B cell (primary cell): ENCODE measurements at regions of chr10 and their contacts with region 1.

Region 1: DNA sequence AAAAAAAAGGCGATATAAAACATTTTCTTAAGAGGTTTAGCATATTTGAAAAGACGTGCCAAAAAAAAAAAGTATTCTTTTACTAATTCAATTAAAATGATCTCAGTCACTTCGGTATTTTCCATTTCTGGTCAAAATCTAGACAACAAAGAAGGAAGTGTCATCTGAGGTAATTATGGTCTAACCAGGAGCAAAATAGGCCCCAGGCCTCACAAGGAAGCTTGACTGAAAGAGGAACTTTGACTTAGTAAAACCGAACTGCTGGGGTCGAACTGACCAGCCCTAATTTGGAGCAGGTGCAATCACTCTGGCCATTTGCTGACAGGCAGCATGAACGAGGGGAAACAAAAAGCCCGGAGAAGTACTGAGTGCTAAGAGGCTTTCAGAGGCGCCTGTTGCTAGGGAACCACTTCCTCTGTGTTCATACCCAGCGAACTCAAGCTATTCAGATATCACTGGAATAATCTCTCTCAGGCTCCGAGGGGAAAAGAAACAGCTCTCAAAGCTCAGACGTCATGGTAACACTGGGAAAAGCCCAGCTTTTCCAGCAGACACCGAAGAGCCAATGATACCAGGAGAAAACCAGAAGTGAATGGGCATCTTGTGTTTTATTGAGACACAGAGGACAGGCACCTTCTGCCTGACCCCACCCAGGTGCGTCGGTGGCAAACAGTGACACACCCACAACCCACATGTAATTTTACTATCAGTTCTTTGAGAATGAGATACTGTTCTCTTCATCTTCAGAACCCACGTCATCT is 126.5 kb downstream of the FAM107B start:
- DNase-seq: peak; percentile 92
- ATAC-seq: peak; percentile 81
- H3K4me3 ChIP-seq: peak overlapping the region; percentile 29 to 58 (median 35)
- H3K4me3 Mint-ChIP-seq: peak overlapping the region; percentile 83
- H3K27ac ChIP-seq: peak overlapping the region; percentile 96 to 99
- H3K27ac Mint-ChIP-seq: peak overlapping the region; percentile 98
- H3K4me1 ChIP-seq: peaks cover 57 to 71% of the 10 kb centered on the region in 2 donors
- H3K4me1 Mint-ChIP-seq: peaks cover 82% of the 10 kb centered on the region
- H3K27me3 ChIP-seq: no peaks in the 10 kb centered on the region
- H3K27me3 Mint-ChIP-seq: no peaks in the 10 kb centered on the region
- CTCF ChIP-seq: no peak

Region 2: GRCh38 chr10:14659626-14660196 is 11.5 kb after region 1 on chr10:
- CTCF ChIA-PET with region 1: interaction called, 4 read pairs
- POLR2A ChIA-PET with region 1: interaction called, 11 read pairs
- intact Hi-C with region 1: loop called (anchors 1 kb)
- DNase-seq: peak; percentile 81
- ATAC-seq: peak; percentile 75
- H3K4me3 ChIP-seq: peak overlapping the region in 3 of 5 experiments; percentile 2 to 45 (median 3)
- H3K4me3 Mint-ChIP-seq: peak overlapping the region; percentile 66
- H3K27ac ChIP-seq: peak overlapping the region; percentile 72 to 88
- H3K27ac Mint-ChIP-seq: peak overlapping the region; percentile 94
- H3K4me1 ChIP-seq: peaks cover 63 to 71% of the 10 kb centered on the region in 2 donors
- H3K4me1 Mint-ChIP-seq: peaks cover 87% of the 10 kb centered on the region
- H3K27me3 ChIP-seq: no peaks in the 10 kb centered on the region
- H3K27me3 Mint-ChIP-seq: no peaks in the 10 kb centered on the region
- CTCF ChIP-seq: no peak

Region 3: DNA sequence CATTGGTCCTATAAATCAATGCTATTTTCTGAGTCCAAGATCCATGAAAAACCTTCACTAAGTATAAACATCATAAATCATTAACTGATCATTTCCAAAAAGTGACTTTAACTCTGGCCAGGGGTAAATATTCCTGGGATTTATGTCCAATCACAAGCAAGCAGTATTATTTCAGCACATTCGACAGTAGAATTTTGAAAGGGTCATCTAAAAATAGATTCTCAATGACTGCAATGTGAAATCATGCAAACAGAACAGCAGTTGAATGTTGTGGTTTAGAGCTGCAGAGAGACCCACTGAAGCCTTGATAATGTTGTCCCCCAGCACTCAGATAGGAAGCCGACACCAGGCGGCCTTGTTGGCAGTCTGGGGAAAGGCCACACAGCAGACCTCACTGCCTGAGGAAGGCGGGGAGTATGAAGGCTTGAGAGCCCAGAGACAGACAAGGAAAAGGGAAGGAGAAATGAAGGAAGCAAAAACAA is 88.5 kb after region 1 on chr10:
- CTCF ChIA-PET with region 1: no interaction called
- POLR2A ChIA-PET with region 1: interaction called, 15 read pairs
- intact Hi-C with region 1: loop called (anchors 1 kb)
- DNase-seq: peak; percentile 76
- ATAC-seq: peak; percentile 78
- H3K4me3 ChIP-seq: peak overlapping the region in 1 of 5 experiments; percentile 6
- H3K4me3 Mint-ChIP-seq: peak overlapping the region; percentile 73
- H3K27ac ChIP-seq: peak overlapping the region; percentile 84
- H3K27ac Mint-ChIP-seq: peak overlapping the region; percentile 95
- H3K4me1 ChIP-seq: peaks cover 64 to 70% of the 10 kb centered on the region in 2 donors
- H3K4me1 Mint-ChIP-seq: peaks cover 68% of the 10 kb centered on the region
- H3K27me3 ChIP-seq: no peaks in the 10 kb centered on the region
- H3K27me3 Mint-ChIP-seq: no peaks in the 10 kb centered on the region
- CTCF ChIP-seq: no peak

Region 4: GRCh38 chr10:14742815-14743214 is 94.6 kb after region 1 on chr10:
- CTCF ChIA-PET with region 1: interaction called, 3 read pairs
- POLR2A ChIA-PET with region 1: interaction called, 15 read pairs
- intact Hi-C with region 1: loop called (anchors 1 kb)
- DNase-seq: peak; percentile 78
- ATAC-seq: peak; percentile 83
- H3K4me3 ChIP-seq: peak overlapping the region in 1 of 5 experiments; percentile 14
- H3K4me3 Mint-ChIP-seq: peak overlapping the region; percentile 74
- H3K27ac ChIP-seq: peak overlapping the region; percentile 93 to 98
- H3K27ac Mint-ChIP-seq: peak overlapping the region; percentile 88
- H3K4me1 ChIP-seq: peaks cover 71 to 76% of the 10 kb centered on the region in 2 donors
- H3K4me1 Mint-ChIP-seq: peaks cover 83% of the 10 kb centered on the region
- H3K27me3 ChIP-seq: no peaks in the 10 kb centered on the region
- H3K27me3 Mint-ChIP-seq: no peaks in the 10 kb centered on the region
- CTCF ChIP-seq: no peak

Region 5: DNA sequence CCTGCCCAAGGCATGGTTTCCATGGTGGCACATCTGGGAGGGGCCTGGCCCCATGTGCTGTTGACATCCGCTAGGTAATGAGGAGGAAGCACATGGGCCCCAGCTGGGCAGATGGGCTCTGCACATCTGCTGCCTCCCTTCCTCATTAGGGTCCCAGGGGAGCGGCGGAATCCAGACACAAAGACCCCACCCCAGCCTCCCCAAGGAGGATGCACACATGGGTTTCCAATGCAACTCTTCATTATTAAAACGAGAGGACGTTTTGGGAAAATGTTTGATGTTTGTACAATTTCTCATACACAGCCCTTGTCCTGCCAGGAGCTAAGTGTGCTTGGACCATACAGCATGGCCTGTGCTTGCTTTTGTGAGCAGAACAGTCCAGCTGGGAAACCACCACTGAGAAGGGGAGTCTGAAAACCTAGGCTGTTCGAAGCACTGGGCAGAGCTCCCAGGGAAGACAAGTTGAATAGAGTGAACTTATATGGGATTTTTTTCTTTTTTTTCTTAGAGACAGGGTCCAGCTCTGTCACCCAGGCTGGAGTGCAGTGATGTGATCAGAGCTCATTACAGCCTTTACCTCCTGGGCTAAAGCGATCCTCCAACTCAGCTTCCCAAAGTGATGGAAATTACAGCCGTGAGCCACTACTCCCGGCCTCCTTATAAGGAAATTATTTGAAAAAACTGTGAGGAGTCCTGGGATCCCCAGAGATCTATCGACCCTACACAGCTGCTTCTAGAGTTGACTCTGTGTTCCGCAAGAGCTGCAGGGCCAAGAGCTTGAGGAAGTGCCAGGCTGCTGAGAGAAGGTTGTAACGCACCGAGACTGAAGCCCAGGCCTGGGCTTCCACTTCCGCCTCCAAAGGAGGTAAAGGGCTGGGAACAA is 103.1 kb after region 1 on chr10:
- CTCF ChIA-PET with region 1: interaction called, 6 read pairs
- POLR2A ChIA-PET with region 1: interaction called, 7 read pairs
- intact Hi-C with region 1: loop called (anchors 1 kb)
- DNase-seq: peak; percentile 85
- ATAC-seq: peak; percentile 80
- H3K4me3 ChIP-seq: peak overlapping the region in 3 of 5 experiments; percentile 6 to 30 (median 13)
- H3K4me3 Mint-ChIP-seq: peak overlapping the region; percentile 81
- H3K27ac ChIP-seq: peak overlapping the region; percentile 84 to 96
- H3K27ac Mint-ChIP-seq: peak overlapping the region; percentile 98
- H3K4me1 ChIP-seq: peaks cover 48 to 58% of the 10 kb centered on the region in 2 donors
- H3K4me1 Mint-ChIP-seq: peaks cover 62% of the 10 kb centered on the region
- H3K27me3 ChIP-seq: no peaks in the 10 kb centered on the region
- H3K27me3 Mint-ChIP-seq: no peaks in the 10 kb centered on the region
- CTCF ChIP-seq: no peak

Region 6: DNA sequence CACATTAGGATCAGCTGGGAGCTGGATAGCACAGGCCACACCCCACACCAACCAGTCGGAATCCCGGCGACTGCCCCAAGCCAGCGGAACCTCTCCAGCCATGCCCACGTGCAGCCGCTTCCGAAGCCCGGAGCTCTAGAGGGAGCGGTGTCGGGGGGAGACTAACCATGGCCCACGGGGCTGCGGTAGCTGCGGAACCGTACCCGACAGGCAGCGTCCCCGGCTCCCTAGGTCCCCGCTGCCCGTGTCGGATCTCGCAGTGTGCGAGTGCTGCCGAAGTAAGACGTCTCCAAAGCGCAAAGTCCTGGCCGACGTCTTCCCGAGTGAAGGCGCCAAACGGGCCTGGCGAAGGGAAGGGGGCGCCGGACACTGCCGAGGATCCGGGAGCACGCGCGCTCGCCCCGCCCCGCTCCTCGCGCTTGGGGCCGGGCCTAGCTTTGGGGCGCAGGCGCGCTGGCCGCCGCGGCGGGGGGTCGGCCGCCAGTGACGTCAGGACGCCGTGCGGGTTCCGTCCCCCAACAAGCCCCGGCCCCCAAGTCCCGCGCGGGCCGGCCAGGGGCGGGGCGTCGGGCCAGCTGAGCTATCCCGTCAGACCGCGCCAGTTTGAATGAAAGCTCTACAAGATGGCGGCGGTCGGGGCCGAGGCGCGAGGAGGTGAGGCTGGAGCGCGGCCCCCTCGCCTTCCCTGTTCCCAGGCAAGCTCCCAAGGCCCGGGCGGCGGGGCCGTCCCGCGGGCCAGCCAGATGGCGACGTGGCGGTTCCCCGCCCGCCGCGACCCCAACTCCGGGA is 230.3 kb after region 1 on chr10 and contains the start of gene SUV39H2:
- CTCF ChIA-PET with region 1: no interaction called
- POLR2A ChIA-PET with region 1: no interaction called
- intact Hi-C with region 1: loop called (anchors 1 kb)
- DNase-seq: peak; percentile 96
- ATAC-seq: peak; percentile 92
- H3K4me3 ChIP-seq: peak within 1 kb of the TSS; percentile 53 to 98 (median 94)
- H3K4me3 Mint-ChIP-seq: peak within 1 kb of the TSS; percentile 96
- H3K27ac ChIP-seq: peak within 1 kb of the TSS; percentile 64 to 80
- H3K27ac Mint-ChIP-seq: peak within 1 kb of the TSS; percentile 87
- H3K4me1 ChIP-seq: peaks cover 17 to 23% of the 10 kb centered on the region in 2 donors
- H3K4me1 Mint-ChIP-seq: peaks cover 28% of the 10 kb centered on the region
- H3K27me3 ChIP-seq: peaks cover 0 to 6% (median 0%) of the 10 kb centered on the region in 4 experiments
- H3K27me3 Mint-ChIP-seq: no peaks in the 10 kb centered on the region
- CTCF ChIP-seq: no peak
- total RNA-seq, gene SUV39H2: 3.2 and 3.5 TPM in 2 replicates